Psoas muscle (tissue), 8 donors: ENCODE measurements at regions of chr4 and their contacts with region 1.

Region 1: GRCh38 chr4:158850800-158851644 is 82.2 kb downstream of the FNIP2 start:
- DNase-seq: no peak
- ATAC-seq: peak in 1 of 4 donors; percentile 57
- H3K4me3 ChIP-seq: no peak overlapping the region
- H3K27ac ChIP-seq: no peak overlapping the region
- H3K4me1 ChIP-seq: peaks cover 6% of the 10 kb centered on the region
- H3K27me3 ChIP-seq: no peaks in the 10 kb centered on the region
- CTCF ChIP-seq: peak; percentile 68

Region 2: GRCh38 chr4:158729716-158730559 is 121.1 kb before region 1 on chr4:
- intact Hi-C with region 1: loop called (anchors 2 kb)
- DNase-seq: peak; percentile 43 to 66
- ATAC-seq: peak; percentile 87 to 99 (median 94)
- H3K4me3 ChIP-seq: no peak overlapping the region
- H3K27ac ChIP-seq: no peak overlapping the region
- H3K4me1 ChIP-seq: no peaks in the 10 kb centered on the region
- H3K27me3 ChIP-seq: no peaks in the 10 kb centered on the region
- CTCF ChIP-seq: peak; percentile 86